ENCODE measurements at regions of chr10 and their contacts with region 1.

Region 1: GRCh38 chr10:68901104-68901927 is at the start of gene DDX50:
- DNase-seq: peak; percentile 99
- ATAC-seq: peak; percentile 96
- H3K4me3 ChIP-seq: peak within 1 kb of the TSS; percentile 86 to 89 (median 87)
- H3K27ac ChIP-seq: peak within 1 kb of the TSS; percentile 93
- H3K4me1 ChIP-seq: peaks cover 46% of the 10 kb centered on the region
- H3K27me3 ChIP-seq: no peaks in the 10 kb centered on the region; a peak in 1 of 5 replicates
- CTCF ChIP-seq: no peak; the same call in 1 of the 2 replicates
- EP300 ChIP-seq: 0 out of 4 replicates have a peak, but pooled peaks of 1 of the 2 experiments have one; percentile 5
- POLR2A ChIP-seq: peak; percentile 42 to 79
- RAD21 ChIP-seq: 0 out of 2 replicates have a peak, but pooled peaks have one; percentile 8
- total RNA-seq, gene DDX50: 38.2 and 56.3 TPM in 2 replicates

Region 2: DNA sequence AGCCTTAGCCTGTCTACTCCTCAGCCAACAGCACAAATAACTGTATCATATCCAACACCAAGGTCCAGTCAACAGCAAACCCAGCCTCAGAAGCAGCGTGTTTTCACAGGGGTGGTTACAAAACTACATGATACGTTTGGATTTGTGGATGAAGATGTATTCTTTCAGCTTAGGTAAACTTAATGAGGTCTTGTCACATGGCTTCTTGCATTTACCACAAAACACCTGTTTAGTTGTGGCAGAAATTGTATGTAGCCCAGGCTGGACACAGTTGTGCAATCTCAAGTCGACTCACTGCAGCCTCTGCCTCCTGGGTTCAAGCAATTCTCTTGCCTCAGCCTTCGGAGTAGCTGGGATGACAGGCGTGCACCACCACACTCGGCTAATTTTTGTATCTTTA is 158.9 kb before region 1 on chr10:
- CTCF ChIA-PET with region 1: no interaction called
- POLR2A ChIA-PET with region 1: no interaction called
- in situ Hi-C with region 1: no loop called
- intact Hi-C with region 1: no loop called
- DNase-seq: no peak
- ATAC-seq: no peak
- H3K4me3 ChIP-seq: no peak overlapping the region
- H3K27ac ChIP-seq: no peak overlapping the region
- H3K4me1 ChIP-seq: no peaks in the 10 kb centered on the region
- H3K27me3 ChIP-seq: no peaks in the 10 kb centered on the region
- CTCF ChIP-seq: no peak
- EP300 ChIP-seq: no peak
- POLR2A ChIP-seq: no peak
- RAD21 ChIP-seq: no peak

Region 3: DNA sequence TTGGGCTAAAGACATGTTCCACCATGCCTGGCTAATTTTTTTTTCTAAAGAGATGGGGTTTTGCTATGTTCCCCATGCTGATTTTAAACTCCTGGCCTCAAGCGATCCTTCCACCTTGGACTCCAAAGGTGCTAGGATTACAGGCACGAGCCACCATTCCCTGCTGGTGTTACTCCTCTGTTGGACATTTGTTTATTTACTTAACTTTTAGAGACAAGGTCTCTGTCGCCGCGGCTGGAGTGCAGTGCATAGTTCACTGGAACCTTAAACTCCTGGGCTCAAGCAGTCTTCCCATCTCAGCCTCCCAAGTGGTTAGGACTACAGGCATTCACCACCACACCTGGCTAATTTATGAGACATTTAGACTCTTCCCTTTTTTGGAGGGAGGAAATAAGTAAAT is 141.3 kb before region 1 on chr10:
- CTCF ChIA-PET with region 1: no interaction called
- POLR2A ChIA-PET with region 1: no interaction called
- in situ Hi-C with region 1: no loop called
- intact Hi-C with region 1: loop called (anchors 2 kb)
- DNase-seq: peak; percentile 31
- ATAC-seq: peak; percentile 87
- H3K4me3 ChIP-seq: no peak overlapping the region; a peak in 1 of 6 replicates
- H3K27ac ChIP-seq: peak overlapping the region; percentile 40
- H3K4me1 ChIP-seq: peaks cover 18% of the 10 kb centered on the region
- H3K27me3 ChIP-seq: no peaks in the 10 kb centered on the region
- CTCF ChIP-seq: no peak
- EP300 ChIP-seq: no peak
- POLR2A ChIP-seq: no peak
- RAD21 ChIP-seq: no peak

Region 4: DNA sequence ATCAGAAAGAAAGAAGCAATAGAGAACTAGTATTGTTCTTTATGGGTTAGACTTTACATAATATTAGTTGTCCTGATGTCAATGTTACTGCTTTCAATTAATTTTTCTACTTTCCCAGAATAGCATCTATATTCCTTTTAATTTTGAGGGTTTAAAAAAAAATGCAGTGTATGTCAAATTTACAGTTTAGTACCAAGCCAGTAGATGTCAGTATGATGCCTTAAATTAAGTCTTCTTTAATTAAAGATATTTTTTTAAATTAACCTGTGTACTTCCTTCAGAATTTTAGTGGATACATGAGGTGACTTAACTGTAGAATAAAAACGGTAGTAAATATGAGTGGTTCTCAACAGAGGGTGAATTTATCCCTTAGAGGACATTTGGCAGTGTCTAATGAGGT is 109.2 kb before region 1 on chr10:
- CTCF ChIA-PET with region 1: interaction called, 22 read pairs
- POLR2A ChIA-PET with region 1: interaction called, 3 read pairs
- in situ Hi-C with region 1: loop called (anchors 5 kb)
- intact Hi-C with region 1: loop called (anchors 10 kb)
- DNase-seq: no peak
- ATAC-seq: no peak
- H3K4me3 ChIP-seq: no peak overlapping the region
- H3K27ac ChIP-seq: no peak overlapping the region
- H3K4me1 ChIP-seq: no peaks in the 10 kb centered on the region
- H3K27me3 ChIP-seq: no peaks in the 10 kb centered on the region
- CTCF ChIP-seq: no peak
- EP300 ChIP-seq: no peak
- POLR2A ChIP-seq: no peak
- RAD21 ChIP-seq: no peak

Region 5: DNA sequence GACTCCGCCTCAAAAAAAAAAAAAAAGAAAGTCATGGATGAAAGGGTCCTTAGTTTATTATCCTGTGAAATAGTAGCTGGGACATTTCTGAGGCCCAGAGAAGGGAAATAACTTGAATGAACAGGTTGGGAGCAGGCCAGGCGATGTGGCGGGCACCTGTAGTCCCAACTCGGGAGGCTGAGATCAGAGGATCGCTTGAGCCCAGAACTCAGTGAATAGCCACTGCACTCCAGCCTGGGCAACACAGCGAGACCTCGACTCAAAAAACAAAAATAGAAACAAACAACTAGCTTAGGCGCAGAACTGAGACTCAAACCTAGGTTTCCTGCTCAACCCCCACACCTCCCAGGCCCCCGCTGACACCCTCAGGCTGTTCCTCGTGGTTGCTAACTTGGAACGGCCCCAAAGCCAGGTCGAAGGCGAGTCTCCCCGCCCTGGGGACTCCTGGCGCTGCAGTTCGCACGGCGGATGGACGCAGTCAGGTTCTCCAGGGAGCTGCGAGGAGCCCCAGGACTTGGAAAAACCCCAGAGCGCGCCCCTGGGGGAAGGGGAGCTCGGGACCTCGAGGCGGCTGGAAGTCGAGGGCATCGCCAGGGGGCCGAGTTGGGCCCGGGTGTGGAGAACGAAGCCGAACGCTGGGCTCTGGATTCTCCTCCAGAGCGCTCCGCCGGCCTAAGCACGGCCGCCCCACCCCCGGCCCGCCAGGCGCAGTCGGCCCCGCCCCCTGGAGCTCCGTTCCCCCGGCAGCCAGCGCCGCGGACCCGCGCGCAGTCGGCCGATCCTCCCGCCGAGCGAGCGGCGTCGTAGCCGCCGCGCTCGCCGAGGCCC is 74.3 kb before region 1 on chr10 and contains the start of gene STOX1:
- CTCF ChIA-PET with region 1: interaction called, 3 read pairs
- POLR2A ChIA-PET with region 1: interaction called, 31 read pairs
- in situ Hi-C with region 1: no loop called
- intact Hi-C with region 1: loop called (anchors 1 kb)
- DNase-seq: peak; percentile 43
- ATAC-seq: peak; percentile 82
- H3K4me3 ChIP-seq: peak within 1 kb of the TSS; percentile 72 to 89 (median 77)
- H3K27ac ChIP-seq: peak within 1 kb of the TSS; percentile 76
- H3K4me1 ChIP-seq: peaks cover 19% of the 10 kb centered on the region
- H3K27me3 ChIP-seq: no peaks in the 10 kb centered on the region
- CTCF ChIP-seq: peak; percentile 30; the same call in 1 of the 2 replicates
- EP300 ChIP-seq: no peak
- POLR2A ChIP-seq: peak in 1 of 2 experiments; percentile 52; a peak in 1 of 4 replicates
- RAD21 ChIP-seq: peak; percentile 34; the same call in 1 of the 2 replicates
- total RNA-seq, gene STOX1: 6.0 and 9.4 TPM in 2 replicates

Region 6: GRCh38 chr10:68871731-68872342 is 29.5 kb before region 1 on chr10:
- CTCF ChIA-PET with region 1: no interaction called
- POLR2A ChIA-PET with region 1: interaction called, 24 read pairs
- in situ Hi-C with region 1: no loop called
- intact Hi-C with region 1: no loop called
- DNase-seq: peak; percentile 46
- ATAC-seq: no peak
- H3K4me3 ChIP-seq: no peak overlapping the region; a peak in 1 of 6 replicates
- H3K27ac ChIP-seq: peak overlapping the region; percentile 63
- H3K4me1 ChIP-seq: peaks cover 65% of the 10 kb centered on the region
- H3K27me3 ChIP-seq: no peaks in the 10 kb centered on the region
- CTCF ChIP-seq: no peak
- EP300 ChIP-seq: no peak
- POLR2A ChIP-seq: no peak
- RAD21 ChIP-seq: no peak

Region 7: GRCh38 chr10:68879627-68880026 is 21.7 kb before region 1 on chr10:
- CTCF ChIA-PET with region 1: no interaction called
- POLR2A ChIA-PET with region 1: interaction called, 24 read pairs
- in situ Hi-C with region 1: no loop called
- intact Hi-C with region 1: no loop called
- DNase-seq: no peak
- ATAC-seq: no peak
- H3K4me3 ChIP-seq: no peak overlapping the region
- H3K27ac ChIP-seq: no peak overlapping the region
- H3K4me1 ChIP-seq: peaks cover 61% of the 10 kb centered on the region
- H3K27me3 ChIP-seq: no peaks in the 10 kb centered on the region
- CTCF ChIP-seq: no peak
- EP300 ChIP-seq: no peak
- POLR2A ChIP-seq: no peak
- RAD21 ChIP-seq: no peak

Region 8: GRCh38 chr10:68955832-68956532 is 54.7 kb after region 1 on chr10 and contains the start of gene DDX21:
- CTCF ChIA-PET with region 1: no interaction called
- POLR2A ChIA-PET with region 1: interaction called, 9 read pairs
- in situ Hi-C with region 1: no loop called
- intact Hi-C with region 1: loop called (anchors 1 kb)
- DNase-seq: peak; percentile 92
- ATAC-seq: peak; percentile 96
- H3K4me3 ChIP-seq: peak within 1 kb of the TSS; percentile 66 to 96 (median 90)
- H3K27ac ChIP-seq: peak within 1 kb of the TSS; percentile 91
- H3K4me1 ChIP-seq: peaks cover 32% of the 10 kb centered on the region
- H3K27me3 ChIP-seq: no peaks in the 10 kb centered on the region; a peak in 1 of 5 replicates
- CTCF ChIP-seq: peak; percentile 73
- EP300 ChIP-seq: no peak; a peak in 1 of 4 replicates
- POLR2A ChIP-seq: peak; percentile 86 to 87
- RAD21 ChIP-seq: no peak
- total RNA-seq, gene DDX21: 147 and 243 TPM in 2 replicates